Activated T-helper 2 cell treated with anti-CD3 and anti-CD28 coated beads, Interferon-gamma antibody, Interleukin-2, Interleukin-4, amounts not matched to agents 10 μg/mL and 5 μg/mL and 100 μg/mL, durations not matched to agents 14 hours and 24 hours and 36 hours (primary cell): ENCODE measurements at regions of chr6 and their contacts with region 1.

Region 1: DNA sequence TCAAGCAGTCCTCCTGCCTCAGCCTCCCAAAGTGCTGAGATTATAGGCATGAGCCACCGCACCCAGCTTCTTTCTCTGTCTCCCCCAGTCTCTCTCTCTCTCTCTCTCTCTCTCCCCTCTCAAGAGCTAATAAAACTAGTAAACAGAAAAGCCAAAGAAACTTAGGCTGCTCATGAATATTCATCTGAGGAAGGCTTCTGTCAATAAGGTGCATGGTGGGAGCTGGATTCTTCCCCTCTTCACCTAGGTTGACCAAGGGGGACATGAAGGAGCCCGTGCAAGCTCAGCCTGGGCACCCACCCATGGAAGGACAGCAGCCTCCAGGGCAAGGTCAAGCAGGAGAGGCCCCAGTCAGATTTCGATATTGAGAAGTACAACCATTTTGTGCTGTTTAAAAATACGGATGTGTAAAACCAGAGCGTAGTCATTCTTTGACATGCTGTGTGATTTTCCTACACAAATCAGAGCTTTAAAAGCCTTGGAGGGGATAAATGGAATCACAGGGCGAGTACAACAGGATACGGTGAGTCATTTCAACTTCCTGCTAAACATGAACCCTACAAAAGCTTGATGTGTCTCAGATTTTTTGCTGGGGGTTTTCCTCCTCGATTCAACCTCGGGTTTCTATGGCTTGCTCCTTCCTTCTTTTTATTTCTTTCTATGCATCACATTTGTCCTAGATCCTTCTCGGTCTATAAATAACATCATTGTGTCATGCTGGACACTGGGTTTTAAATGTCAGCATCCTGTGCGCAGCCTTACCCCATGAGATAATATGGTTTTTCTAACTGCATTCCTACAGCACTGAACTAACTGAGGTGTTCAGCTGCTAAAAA is 368.9 kb upstream of the JARID2 start:
- DNase-seq: peak; percentile 22
- H3K4me3 Mint-ChIP-seq: peak overlapping the region; percentile 60
- H3K27ac Mint-ChIP-seq: peak overlapping the region; percentile 91
- H3K4me1 Mint-ChIP-seq: peaks cover 65% of the 10 kb centered on the region
- H3K27me3 Mint-ChIP-seq: no peaks in the 10 kb centered on the region

Region 2: DNA sequence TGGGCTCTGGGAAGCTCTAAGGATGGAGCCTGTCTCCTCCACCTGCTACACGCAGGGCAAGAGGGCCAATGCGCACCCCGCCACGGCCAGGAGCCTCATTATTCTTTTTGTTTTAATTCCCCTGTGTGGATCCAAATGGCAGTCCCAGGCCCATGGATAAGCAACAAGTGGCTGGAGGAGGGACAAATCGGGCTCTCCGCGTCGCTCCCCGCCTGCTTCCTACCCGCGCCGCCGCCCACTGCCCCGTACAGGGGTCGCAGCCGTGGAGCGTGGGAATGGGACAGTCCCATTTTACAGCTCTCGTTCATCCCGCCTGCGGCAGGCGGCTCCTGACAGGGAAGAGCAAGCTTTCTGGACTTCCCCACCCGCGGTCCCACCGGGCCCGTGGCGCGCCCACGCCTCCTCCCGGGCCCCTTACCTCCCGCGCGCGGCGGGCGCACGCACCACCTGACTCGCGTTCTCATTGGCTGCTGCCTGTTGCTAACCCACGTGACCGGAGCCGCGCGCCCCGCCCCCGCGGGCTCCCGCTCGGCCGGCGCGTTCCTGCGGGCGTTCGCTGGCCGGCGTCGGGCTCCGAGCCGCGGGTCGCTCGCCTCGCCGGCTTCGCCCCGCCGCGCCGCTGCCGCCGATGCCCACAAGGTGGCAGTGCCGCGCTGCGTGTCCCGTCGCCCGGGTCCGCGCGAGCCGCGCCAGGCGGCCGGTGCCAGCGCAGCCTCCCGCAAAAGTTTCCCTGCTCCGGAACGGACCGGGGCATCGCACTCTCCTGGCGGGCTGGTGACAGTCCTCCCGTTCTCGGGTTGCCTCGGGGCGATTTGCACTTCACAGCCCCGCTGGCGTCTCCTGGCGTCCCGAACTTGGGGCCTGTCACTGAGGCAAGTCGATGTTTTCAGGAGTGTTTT is 666.1 kb before region 1 on chr6:
- intact Hi-C with region 1: loop called (anchors 1 kb)
- DNase-seq: peak; percentile 92
- H3K4me3 Mint-ChIP-seq: peak overlapping the region; percentile 78
- H3K27ac Mint-ChIP-seq: peak overlapping the region; percentile 83
- H3K4me1 Mint-ChIP-seq: peaks cover 40% of the 10 kb centered on the region
- H3K27me3 Mint-ChIP-seq: no peaks in the 10 kb centered on the region

Region 3: DNA sequence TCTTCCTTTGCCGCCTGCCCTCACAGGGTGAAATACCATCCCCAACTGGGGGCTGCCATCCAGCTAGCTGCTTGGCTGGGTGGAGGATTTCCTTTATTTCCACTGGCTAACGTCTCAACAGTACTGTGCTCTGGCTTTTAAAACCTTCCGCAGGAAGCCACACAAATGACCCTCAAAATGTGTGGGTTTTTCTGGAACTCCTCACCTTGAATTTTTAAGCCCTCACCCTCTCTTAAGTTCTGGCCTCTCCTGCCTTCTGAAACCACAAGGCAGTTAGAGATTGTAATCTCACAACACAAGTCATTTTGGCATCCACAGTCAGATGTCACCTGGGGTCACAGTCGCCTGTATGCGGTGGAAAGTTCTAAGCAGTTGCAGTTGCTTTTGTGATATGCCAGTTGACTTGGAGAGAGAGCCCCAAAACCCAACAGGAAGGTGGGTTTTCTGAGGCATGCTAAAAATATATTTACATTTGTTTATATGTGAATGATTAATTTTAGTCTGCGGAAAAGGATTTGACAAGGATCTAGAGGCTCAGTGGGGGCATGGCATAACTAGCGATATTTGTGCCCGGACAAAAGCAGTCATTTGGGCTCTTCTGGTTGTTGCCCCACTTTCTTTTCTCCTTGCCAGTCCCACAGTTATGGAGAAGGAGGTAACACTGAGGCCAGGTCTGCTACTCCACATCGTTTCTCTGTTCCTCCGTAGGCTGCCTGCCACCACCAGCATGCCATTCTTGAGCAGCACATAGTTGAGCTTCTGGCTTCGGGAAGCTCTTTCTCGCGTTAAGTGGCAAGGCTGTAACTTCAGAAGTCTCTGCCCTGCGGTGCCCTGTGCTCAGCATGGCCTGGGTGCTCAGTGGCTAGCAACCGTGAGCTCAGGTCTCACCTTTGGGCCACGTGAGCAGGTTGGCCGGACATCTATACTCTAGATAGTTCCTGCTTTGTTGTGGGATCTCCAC is 424.1 kb before region 1 on chr6:
- intact Hi-C with region 1: loop called (anchors 1 kb)
- DNase-seq: peak; percentile 81
- H3K4me3 Mint-ChIP-seq: peak overlapping the region; percentile 63
- H3K27ac Mint-ChIP-seq: peak overlapping the region; percentile 90
- H3K4me1 Mint-ChIP-seq: peaks cover 91% of the 10 kb centered on the region
- H3K27me3 Mint-ChIP-seq: no peaks in the 10 kb centered on the region

Region 4: DNA sequence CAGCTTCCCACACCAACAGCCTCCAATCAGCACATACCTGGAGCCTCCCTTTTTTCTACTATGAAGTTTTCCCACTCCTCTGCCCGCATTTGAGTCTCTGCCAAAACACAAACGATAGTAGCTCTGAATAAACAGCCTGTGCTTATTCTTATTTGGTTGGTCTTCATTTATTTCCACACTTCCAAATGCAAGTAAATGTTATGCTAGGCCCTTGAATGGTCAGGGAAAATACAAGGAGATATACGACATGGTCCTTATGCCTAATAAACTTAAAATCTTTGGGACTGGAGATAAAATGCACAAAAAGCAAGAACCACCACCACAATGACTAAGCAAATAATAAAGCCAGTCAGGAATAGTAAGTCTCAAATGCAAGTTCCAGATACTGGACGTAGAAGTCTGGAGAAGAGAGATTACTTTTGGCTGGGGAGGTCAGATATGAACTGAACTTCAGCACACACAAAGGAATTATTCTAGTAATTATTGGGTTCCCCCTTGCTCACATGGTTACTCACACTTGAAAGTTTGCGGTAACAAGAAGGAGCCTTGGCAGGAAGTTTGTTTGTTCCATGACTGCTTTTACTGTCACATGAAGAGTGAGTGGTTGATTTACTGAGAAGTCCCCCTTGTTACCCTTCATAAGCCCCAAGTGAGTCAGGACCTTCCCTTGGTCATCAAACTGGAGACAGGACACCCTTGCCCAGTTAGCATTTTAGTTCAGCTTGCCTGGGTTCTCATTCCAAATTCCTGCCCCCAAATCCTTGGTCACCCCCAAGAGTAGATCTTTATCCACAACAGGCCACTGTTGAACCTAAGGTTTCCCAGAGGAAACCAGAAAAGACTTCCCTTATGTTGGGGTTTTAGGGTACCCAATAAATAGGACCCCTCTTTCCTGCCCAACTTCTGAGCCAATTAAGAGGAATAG is 142.3 kb before region 1 on chr6:
- intact Hi-C with region 1: loop called (anchors 1 kb)
- DNase-seq: peak; percentile 35
- H3K4me3 Mint-ChIP-seq: peak overlapping the region; percentile 62
- H3K27ac Mint-ChIP-seq: peak overlapping the region; percentile 96
- H3K4me1 Mint-ChIP-seq: peaks cover 96% of the 10 kb centered on the region
- H3K27me3 Mint-ChIP-seq: no peaks in the 10 kb centered on the region

Region 5: DNA sequence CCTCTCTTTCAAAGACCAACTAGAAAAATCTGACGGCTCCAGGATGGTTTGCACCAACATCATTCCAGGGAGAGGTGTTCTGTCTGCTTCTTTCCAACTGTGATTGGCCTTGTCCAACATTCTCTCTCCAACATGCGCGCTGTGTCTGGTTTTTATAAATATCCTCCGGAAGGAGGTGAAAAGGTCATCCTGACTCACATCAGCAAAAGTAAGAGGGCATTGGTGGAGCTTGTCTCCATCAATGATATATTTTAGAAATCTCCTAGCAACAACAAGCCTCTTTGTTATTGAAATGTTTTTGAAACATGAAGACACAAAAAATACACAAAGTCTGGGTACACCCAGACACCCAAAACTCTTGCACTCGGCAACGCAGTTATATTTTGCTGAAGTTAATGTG is 106.4 kb before region 1 on chr6:
- intact Hi-C with region 1: no loop called
- DNase-seq: no peak
- H3K4me3 Mint-ChIP-seq: no peak overlapping the region
- H3K27ac Mint-ChIP-seq: no peak overlapping the region
- H3K4me1 Mint-ChIP-seq: peaks cover 7% of the 10 kb centered on the region
- H3K27me3 Mint-ChIP-seq: no peaks in the 10 kb centered on the region

Region 6: DNA sequence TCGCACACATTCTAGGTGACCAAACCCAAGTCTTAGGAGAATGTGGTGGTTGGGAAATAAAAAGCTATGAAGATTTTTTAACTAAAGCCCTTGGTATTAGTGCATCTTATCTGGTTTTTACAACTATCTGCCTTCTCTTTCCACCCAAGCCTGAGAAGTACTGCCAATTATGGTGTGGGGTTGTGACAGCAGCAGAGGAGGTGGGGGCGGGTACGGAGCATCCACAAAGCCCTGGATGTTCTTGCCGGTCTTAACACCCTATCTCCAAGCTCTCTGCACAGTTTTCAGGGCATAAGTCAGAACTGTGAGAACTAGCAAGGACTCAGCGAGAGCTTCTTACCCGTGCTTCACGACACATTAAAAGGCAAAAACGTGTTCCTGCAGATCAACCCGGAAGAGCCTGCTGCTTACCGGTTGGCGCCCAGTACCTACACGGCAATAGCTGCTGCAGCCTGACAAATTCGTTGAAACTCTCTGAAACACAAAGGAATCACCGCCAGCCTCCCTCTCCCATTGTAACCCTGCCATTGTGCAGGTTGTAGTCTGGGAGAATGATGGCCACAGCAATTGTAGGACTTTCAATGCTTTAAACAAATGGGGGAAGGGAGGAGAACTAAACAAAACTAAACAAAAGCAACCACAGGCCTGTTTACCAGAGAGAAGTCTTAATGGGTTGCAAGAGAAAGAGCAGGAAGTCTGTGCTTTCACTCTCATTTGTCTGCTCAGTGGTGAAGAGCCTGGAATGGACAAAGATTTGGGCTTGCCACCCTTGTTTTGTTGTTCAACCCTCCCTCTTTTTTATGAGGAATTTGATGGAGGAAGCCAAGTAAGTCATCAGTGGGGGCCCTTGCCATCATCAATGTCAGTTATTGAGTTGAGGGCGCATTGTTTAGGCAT is 92.2 kb before region 1 on chr6:
- intact Hi-C with region 1: no loop called
- DNase-seq: peak; percentile 13
- H3K4me3 Mint-ChIP-seq: peak overlapping the region; percentile 18
- H3K27ac Mint-ChIP-seq: peak overlapping the region; percentile 80
- H3K4me1 Mint-ChIP-seq: peaks cover 46% of the 10 kb centered on the region
- H3K27me3 Mint-ChIP-seq: no peaks in the 10 kb centered on the region

Region 7: GRCh38 chr6:14841901-14842421 is 35.0 kb before region 1 on chr6:
- intact Hi-C with region 1: no loop called
- DNase-seq: no peak
- H3K4me3 Mint-ChIP-seq: no peak overlapping the region
- H3K27ac Mint-ChIP-seq: no peak overlapping the region
- H3K4me1 Mint-ChIP-seq: peaks cover 18% of the 10 kb centered on the region
- H3K27me3 Mint-ChIP-seq: no peaks in the 10 kb centered on the region

Region 8: DNA sequence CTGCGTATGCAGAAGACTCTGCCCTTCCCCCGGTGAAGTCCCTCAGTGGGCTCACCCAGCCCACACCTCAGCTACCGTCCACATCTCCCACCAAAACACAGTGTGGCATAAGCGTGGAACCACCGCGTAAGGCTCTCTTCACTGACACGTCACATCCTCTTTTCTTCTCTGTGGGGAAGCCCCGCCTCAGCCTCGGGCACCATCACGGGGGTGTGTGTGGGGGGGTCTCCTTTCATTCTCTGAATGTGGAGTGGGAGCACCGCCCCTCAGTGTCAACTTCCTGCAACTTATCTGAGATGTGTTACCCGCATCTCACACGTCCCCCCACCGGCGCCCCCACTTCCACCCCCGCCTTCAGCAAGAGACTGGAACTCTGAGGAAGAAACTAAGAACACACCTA is 19.5 kb before region 1 on chr6:
- intact Hi-C with region 1: loop called (anchors 1 kb)
- DNase-seq: peak; percentile 18
- H3K4me3 Mint-ChIP-seq: peak overlapping the region; percentile 19
- H3K27ac Mint-ChIP-seq: peak overlapping the region; percentile 92
- H3K4me1 Mint-ChIP-seq: peaks cover 46% of the 10 kb centered on the region
- H3K27me3 Mint-ChIP-seq: no peaks in the 10 kb centered on the region

Region 9: DNA sequence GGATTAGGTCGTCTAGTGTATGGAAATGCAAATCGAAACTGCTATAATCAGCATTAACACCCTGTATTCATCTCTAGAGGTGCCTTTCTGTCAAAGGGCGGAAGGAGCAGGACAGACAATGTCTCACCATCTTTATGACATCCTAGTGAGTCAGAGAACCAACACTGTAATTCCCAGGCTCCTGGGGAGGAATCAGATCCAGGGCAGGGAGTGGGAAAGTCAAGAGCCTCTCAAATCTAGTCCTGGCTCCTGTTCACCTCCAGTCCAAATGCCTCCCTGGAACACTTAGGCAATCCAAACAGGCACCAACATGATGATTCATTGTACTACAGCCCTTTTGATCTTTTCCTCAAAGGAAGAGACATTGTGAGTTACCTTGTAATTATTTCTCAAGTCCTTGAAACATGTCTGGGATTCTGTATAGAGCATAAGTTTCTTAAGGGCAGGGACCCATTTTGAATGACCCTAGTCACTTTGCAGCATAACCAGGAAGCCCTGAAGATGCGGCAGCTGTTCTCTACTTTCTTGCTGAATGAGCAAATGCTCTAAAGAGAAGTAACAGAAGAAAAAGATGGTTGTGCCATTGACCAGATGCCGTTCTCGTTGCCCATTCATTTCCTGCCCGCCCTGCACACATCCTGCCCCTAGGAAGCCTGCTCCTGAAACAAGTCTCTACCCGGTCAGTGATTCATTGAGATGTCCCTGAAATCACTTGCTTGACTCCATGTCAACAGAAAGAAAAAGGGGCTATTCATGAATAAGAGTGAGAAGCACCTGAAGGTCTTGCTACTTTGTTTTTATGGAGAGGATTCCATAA is 256.1 kb after region 1 on chr6:
- intact Hi-C with region 1: loop called (anchors 5 kb)
- DNase-seq: no peak
- H3K4me3 Mint-ChIP-seq: no peak overlapping the region
- H3K27ac Mint-ChIP-seq: no peak overlapping the region
- H3K4me1 Mint-ChIP-seq: peaks cover 33% of the 10 kb centered on the region
- H3K27me3 Mint-ChIP-seq: no peaks in the 10 kb centered on the region

Region 10: GRCh38 chr6:15239616-15240364 is 362.8 kb after region 1 on chr6:
- intact Hi-C with region 1: no loop called
- DNase-seq: no peak
- H3K4me3 Mint-ChIP-seq: no peak overlapping the region
- H3K27ac Mint-ChIP-seq: no peak overlapping the region
- H3K4me1 Mint-ChIP-seq: peaks cover 15% of the 10 kb centered on the region
- H3K27me3 Mint-ChIP-seq: no peaks in the 10 kb centered on the region

Region 11: GRCh38 chr6:15299430-15300131 is 422.6 kb after region 1 on chr6:
- intact Hi-C with region 1: loop called (anchors 1 kb)
- DNase-seq: peak; percentile 46
- H3K4me3 Mint-ChIP-seq: peak overlapping the region; percentile 53
- H3K27ac Mint-ChIP-seq: peak overlapping the region; percentile 68
- H3K4me1 Mint-ChIP-seq: peaks cover 74% of the 10 kb centered on the region
- H3K27me3 Mint-ChIP-seq: no peaks in the 10 kb centered on the region